Keratinocyte (primary cell): ENCODE measurements at regions of chr9 and their contacts with region 1.

Region 1: GRCh38 chr9:104863180-104863883 is 64.6 kb downstream of the ABCA1 start:
- DNase-seq: peak; percentile 46
- H3K4me3 ChIP-seq: no peak overlapping the region
- H3K27ac ChIP-seq: peak overlapping the region; percentile 41
- H3K4me1 ChIP-seq: peaks cover 39% of the 10 kb centered on the region
- H3K27me3 ChIP-seq: no peaks in the 10 kb centered on the region
- CTCF ChIP-seq: peak; percentile 77 to 89 (median 78)

Region 2: DNA sequence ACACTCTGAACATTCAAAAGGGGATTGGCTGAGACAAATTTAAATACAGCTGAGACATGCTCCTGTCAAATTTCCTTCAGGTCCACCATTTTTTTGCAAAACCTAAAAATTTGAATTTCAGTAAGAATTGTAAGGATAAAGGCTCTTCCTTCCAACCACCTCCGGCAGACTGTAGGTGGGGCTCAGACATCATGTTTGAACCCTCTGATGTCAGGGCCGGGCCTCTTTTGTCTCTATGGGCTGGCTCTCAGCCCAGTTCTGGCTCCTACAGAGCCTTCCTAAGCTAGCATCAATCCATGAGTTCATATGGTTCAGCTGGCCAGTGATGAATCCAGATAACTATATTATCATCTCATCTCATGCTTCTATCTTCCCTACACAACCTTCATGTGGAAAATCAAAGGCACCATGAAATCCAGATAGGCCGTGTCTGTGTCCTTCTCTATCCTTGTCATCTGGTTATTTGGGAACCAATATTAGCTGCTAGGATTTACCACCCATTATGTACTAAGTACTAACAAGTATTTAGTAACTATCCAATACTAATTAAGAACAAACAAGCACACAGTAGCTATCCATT is 55.2 kb before region 1 on chr9:
- dilution Hi-C with region 1: no loop called
- DNase-seq: no peak
- H3K4me3 ChIP-seq: no peak overlapping the region
- H3K27ac ChIP-seq: no peak overlapping the region
- H3K4me1 ChIP-seq: no peaks in the 10 kb centered on the region
- H3K27me3 ChIP-seq: no peaks in the 10 kb centered on the region
- CTCF ChIP-seq: peak in 1 of 3 experiments; percentile 12

Region 3: DNA sequence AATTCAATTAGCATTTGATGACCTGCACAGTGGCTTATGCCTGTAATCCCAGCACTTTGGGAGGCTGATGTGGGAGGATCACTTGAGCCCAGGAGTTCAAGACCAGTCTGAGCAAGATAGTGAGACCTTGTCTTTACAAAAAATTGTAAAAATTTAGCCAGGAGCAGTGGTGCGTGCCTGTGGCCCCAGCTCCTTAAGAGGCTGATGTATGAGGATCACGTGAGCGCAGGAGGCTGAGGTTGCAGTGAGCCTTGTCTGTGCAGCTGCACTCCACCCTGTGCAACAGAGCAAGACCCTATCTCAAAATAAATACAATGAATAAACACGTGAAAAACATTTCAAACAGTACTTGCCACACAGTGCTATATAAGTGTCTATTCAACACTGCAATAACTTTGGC is 60.4 kb after region 1 on chr9:
- dilution Hi-C with region 1: loop called (anchors 5 kb)
- DNase-seq: no peak
- H3K4me3 ChIP-seq: no peak overlapping the region
- H3K27ac ChIP-seq: no peak overlapping the region
- H3K4me1 ChIP-seq: peaks cover 36% of the 10 kb centered on the region
- H3K27me3 ChIP-seq: no peaks in the 10 kb centered on the region
- CTCF ChIP-seq: no peak

Region 4: GRCh38 chr9:105021917-105022316 is 158.6 kb after region 1 on chr9:
- dilution Hi-C with region 1: no loop called
- DNase-seq: no peak
- H3K4me3 ChIP-seq: no peak overlapping the region
- H3K27ac ChIP-seq: no peak overlapping the region
- H3K4me1 ChIP-seq: no peaks in the 10 kb centered on the region
- H3K27me3 ChIP-seq: no peaks in the 10 kb centered on the region
- CTCF ChIP-seq: no peak

Region 5: GRCh38 chr9:105069696-105070095 is 206.4 kb after region 1 on chr9:
- dilution Hi-C with region 1: no loop called
- DNase-seq: no peak
- H3K4me3 ChIP-seq: no peak overlapping the region
- H3K27ac ChIP-seq: peak overlapping the region; percentile 38
- H3K4me1 ChIP-seq: peaks cover 43% of the 10 kb centered on the region
- H3K27me3 ChIP-seq: no peaks in the 10 kb centered on the region
- CTCF ChIP-seq: no peak